PC-9 (cell line): ENCODE measurements at regions of chr5 and their contacts with region 1.

Region 1: GRCh38 chr5:141960449-141961202 is 2.6 kb upstream of the PCDH12 start:
- DNase-seq: peak; percentile 69 to 83
- H3K4me3 ChIP-seq: no peak overlapping the region
- H3K27ac ChIP-seq: no peak overlapping the region
- H3K4me1 ChIP-seq: peaks cover 11% of the 10 kb centered on the region
- H3K27me3 ChIP-seq: no peaks in the 10 kb centered on the region
- CTCF ChIP-seq: peak; percentile 90

Region 2: DNA sequence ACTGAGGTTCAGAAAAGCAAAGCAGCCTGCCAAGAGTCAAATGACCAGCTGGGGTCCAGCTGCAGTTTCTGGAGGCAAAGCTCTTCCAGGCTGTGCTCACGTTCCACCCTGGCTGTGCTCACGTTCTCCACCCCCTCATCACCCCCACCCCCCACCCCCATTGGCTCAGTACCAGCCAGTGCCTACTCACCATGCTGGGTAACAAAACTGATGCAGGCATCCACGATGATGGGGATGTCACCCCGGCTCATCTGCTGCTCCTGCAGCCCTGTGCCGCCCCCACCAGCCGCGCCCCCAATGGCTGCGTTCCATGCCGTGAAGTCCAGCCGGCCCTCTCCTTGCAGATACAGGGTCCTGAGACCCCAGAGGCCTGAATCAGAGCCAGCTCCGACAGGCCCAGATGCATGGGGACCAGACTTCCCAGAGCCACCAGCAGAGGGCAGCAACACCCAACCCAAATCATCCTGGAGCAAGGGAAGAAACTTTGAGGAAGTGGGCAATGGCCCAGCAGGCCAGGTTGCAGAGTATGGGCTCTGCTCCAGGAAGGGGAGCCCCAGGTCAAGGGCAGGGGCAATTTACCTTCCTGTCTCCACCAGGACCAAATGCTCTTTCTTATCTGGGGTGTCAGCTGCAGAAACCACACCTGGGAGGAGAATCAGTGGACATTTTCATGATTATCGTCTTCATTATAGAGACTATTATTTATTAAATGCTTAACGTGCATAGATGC is 295.7 kb before region 1 on chr5:
- CTCF ChIA-PET with region 1: interaction called, 4 read pairs
- POLR2A ChIA-PET with region 1: no interaction called
- intact Hi-C with region 1: loop called (anchors 1 kb)
- DNase-seq: peak; percentile 44 to 74
- H3K4me3 ChIP-seq: no peak overlapping the region
- H3K27ac ChIP-seq: no peak overlapping the region
- H3K4me1 ChIP-seq: no peaks in the 10 kb centered on the region
- H3K27me3 ChIP-seq: no peaks in the 10 kb centered on the region
- CTCF ChIP-seq: peak; percentile 93

Region 3: GRCh38 chr5:141701360-141702119 is 259.1 kb before region 1 on chr5:
- CTCF ChIA-PET with region 1: interaction called, 7 read pairs
- POLR2A ChIA-PET with region 1: no interaction called
- intact Hi-C with region 1: loop called (anchors 1 kb)
- DNase-seq: no peak
- H3K4me3 ChIP-seq: no peak overlapping the region
- H3K27ac ChIP-seq: no peak overlapping the region
- H3K4me1 ChIP-seq: peaks cover 59% of the 10 kb centered on the region
- H3K27me3 ChIP-seq: no peaks in the 10 kb centered on the region
- CTCF ChIP-seq: no peak

Region 4: DNA sequence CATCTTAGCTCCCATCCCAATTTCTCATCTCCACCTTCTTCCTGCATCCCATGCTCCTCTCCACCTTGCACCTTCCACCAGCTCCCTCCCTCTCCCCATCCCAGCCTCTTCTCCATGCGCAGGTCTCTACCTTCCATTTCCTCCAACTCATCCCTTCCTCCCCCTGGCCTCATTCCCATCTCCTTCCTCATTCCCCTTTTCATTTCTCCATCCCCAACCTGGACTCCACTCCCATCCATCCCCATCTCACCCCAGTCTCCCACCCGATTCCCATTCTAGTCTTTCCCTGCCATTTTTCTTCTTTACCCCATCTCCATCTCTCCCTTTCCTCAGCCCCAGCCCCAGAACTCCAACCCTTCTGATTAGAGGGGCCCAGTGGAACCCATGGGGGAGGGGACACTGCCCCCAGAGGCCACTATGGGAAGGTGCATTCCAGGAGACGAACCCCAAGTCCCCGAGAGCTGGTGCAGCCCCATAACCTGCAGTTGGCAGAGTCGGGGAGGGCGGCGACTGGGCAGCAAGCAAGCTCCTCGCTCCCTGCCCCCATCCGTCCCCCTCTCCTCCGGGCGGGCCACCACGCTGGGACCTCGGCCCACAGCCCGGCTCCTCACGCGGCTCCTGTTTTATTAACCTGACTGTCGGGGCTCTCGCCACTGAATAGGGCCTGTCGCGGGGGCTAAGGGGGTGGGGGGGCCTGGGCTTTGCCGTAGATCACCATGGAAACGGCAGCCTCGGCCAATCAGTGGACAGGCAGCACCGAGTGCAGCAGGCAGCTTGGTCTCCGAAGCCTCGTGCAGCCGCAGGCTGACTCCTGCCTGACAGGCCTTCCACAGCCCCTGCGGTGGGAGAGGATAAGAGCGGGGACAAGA is 149.1 kb before region 1 on chr5:
- CTCF ChIA-PET with region 1: no interaction called
- POLR2A ChIA-PET with region 1: no interaction called
- intact Hi-C with region 1: loop called (anchors 5 kb)
- DNase-seq: no peak
- H3K4me3 ChIP-seq: no peak overlapping the region
- H3K27ac ChIP-seq: no peak overlapping the region
- H3K4me1 ChIP-seq: 0 out of 2 replicates have a peak, but pooled peaks cover under 1% of the 10 kb centered on the region
- H3K27me3 ChIP-seq: no peaks in the 10 kb centered on the region
- CTCF ChIP-seq: peak; percentile 84

Region 5: DNA sequence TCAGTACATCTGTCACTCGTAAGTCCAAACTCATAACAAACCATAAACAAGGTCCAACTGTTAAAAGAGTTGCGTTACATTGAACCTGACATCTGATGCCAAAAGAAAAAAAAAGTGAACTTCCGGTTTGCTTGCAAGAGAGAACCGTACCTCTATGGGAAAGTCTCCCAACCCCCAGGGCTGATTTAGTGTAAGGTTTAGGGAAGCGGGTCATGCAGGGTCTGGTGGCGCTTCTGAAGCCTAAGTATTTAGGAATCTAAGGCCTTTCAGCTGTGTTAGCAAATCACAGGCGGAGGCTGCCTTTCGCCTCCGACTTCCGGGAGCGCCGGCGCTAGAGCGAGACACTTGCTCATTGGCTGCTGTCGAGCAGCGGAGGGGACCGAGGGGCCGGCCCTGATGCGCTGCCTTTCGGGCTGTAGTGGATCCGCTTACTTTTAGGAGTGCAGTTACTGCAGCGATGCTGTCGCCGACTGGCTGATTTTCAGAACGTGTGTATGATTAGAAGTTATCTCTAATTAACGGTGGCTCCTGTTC is 64.2 kb after region 1 on chr5:
- CTCF ChIA-PET with region 1: interaction called, 14 read pairs
- POLR2A ChIA-PET with region 1: no interaction called
- intact Hi-C with region 1: no loop called
- DNase-seq: peak; percentile 84 to 92
- H3K4me3 ChIP-seq: peak overlapping the region; percentile 62
- H3K27ac ChIP-seq: peak overlapping the region; percentile 80
- H3K4me1 ChIP-seq: peaks cover 40% of the 10 kb centered on the region
- H3K27me3 ChIP-seq: no peaks in the 10 kb centered on the region
- CTCF ChIP-seq: no peak

Region 6: DNA sequence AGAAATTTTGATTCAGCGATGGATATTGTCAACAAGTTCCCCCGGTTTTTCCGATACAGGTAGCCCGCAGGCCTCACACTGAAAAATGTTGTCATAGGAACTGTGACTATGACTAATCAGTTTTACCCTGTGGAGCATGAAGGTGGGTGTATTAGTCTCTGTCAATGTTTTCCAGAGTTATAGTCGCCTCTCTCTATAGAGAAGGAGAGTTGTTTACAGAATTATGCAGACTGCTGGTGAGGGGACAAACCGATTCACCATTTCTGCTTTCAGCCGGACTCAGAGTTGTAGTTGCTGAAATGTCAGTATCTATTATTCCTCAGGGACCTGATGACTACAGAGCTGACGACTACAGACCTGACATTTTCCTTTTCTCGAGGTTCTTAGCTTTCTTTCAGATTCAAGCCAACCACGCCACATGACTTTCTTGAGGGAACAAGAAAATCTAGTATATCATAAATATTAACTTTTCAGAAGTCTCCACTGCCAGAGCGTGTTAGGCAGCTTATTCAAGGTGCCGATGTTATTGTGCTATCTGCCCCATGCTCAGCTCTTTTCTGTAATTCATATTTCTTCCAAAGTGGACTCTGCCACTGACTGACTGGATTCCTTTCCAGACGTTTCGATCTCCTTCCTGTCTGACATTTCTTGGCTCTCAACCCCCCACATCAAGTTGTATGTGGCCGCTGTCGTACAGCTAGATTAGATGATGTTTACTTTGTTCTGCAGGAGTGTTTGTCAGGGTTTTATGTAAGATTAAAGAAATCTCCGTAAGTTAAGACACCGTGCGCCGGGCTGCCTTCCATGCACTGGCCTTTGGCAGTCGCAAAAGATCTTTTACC is 547.1 kb after region 1 on chr5:
- CTCF ChIA-PET with region 1: no interaction called
- POLR2A ChIA-PET with region 1: no interaction called
- intact Hi-C with region 1: no loop called
- DNase-seq: peak; percentile 49 to 82
- H3K4me3 ChIP-seq: peak overlapping the region; percentile 3; the same call in 1 of the 2 replicates
- H3K27ac ChIP-seq: peak overlapping the region; percentile 72
- H3K4me1 ChIP-seq: peaks cover 58% of the 10 kb centered on the region
- H3K27me3 ChIP-seq: no peaks in the 10 kb centered on the region
- CTCF ChIP-seq: no peak